Right lobe of liver (tissue), 6 donors: ENCODE measurements at regions of chr6 and their contacts with region 1.

Region 1: DNA sequence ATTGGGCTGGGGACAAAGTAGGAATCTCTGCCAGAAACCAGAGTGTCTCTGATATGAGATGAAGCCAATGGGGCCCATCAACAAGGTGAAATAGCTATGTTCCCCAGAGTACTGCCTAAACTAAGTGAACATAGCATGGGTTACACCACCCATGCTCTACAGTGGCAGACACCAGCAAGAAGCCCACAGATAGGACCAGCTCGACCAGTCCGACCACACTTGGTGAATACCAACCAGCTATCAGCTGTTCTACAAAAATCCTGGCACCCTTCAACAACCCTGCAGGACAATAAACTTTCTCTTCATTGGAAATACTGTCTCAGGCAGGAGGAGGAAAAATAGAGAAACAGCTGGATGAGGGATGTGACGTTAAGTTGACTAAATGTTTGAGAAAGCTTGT is 311.4 kb downstream of the EPM2A start:
- DNase-seq: no peak
- ATAC-seq: no peak
- H3K4me3 ChIP-seq: no peak overlapping the region
- H3K27ac ChIP-seq: no peak overlapping the region
- H3K4me1 ChIP-seq: no peaks in the 10 kb centered on the region
- H3K27me3 ChIP-seq: no peaks in the 10 kb centered on the region
- CTCF ChIP-seq: no peak
- POLR2A ChIP-seq: no peak

Region 2: GRCh38 chr6:145469021-145469420 is 45.1 kb after region 1 on chr6:
- intact Hi-C with region 1: loop called in 1 of 2 experiments (anchors 5 kb)
- DNase-seq: no peak
- ATAC-seq: no peak
- H3K4me3 ChIP-seq: no peak overlapping the region
- H3K27ac ChIP-seq: no peak overlapping the region
- H3K4me1 ChIP-seq: no peaks in the 10 kb centered on the region
- H3K27me3 ChIP-seq: no peaks in the 10 kb centered on the region
- CTCF ChIP-seq: no peak
- POLR2A ChIP-seq: no peak